Activated CD4-positive, alpha-beta memory T cell treated with anti-CD3 and anti-CD28 coated beads for 36 hours (primary cell): ENCODE measurements at regions of chr3 and their contacts with region 1.

Region 1: GRCh38 chr3:158109804-158110657 is at the start of gene RSRC1:
- DNase-seq: peak; percentile 85
- H3K4me3 Mint-ChIP-seq: peak within 1 kb of the TSS; percentile 99
- H3K27ac Mint-ChIP-seq: peak within 1 kb of the TSS; percentile 77
- H3K4me1 Mint-ChIP-seq: peaks cover 54% of the 10 kb centered on the region
- H3K27me3 Mint-ChIP-seq: peaks cover 36% of the 10 kb centered on the region
- total RNA-seq, gene RSRC1: 39.4 to 43.8 TPM

Region 2: DNA sequence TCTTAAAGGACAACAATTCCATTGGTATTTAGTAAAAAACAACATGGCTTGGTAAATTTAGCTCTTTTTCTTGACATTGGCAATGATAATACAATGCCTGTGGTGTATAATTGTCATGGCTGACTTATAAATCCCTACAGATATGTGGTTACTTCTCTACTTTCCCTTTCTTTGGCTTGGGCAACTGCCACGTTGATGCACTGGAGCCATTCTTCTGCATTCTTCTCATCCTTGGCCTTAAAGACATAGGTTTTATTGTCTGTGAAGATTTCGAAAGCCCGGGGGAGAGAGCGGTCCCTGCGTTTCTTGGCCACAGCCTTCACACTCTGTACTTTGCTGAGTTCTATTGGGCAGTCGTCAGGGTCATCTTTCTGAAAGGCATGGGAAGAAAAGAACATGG is 849.0 kb before region 1 on chr3:
- CTCF ChIA-PET with region 1: no interaction called
- POLR2A ChIA-PET with region 1: no interaction called
- intact Hi-C with region 1: no loop called
- DNase-seq: no peak
- H3K4me3 Mint-ChIP-seq: no peak overlapping the region
- H3K27ac Mint-ChIP-seq: no peak overlapping the region
- H3K4me1 Mint-ChIP-seq: no peaks in the 10 kb centered on the region
- H3K27me3 Mint-ChIP-seq: no peaks in the 10 kb centered on the region

Region 3: DNA sequence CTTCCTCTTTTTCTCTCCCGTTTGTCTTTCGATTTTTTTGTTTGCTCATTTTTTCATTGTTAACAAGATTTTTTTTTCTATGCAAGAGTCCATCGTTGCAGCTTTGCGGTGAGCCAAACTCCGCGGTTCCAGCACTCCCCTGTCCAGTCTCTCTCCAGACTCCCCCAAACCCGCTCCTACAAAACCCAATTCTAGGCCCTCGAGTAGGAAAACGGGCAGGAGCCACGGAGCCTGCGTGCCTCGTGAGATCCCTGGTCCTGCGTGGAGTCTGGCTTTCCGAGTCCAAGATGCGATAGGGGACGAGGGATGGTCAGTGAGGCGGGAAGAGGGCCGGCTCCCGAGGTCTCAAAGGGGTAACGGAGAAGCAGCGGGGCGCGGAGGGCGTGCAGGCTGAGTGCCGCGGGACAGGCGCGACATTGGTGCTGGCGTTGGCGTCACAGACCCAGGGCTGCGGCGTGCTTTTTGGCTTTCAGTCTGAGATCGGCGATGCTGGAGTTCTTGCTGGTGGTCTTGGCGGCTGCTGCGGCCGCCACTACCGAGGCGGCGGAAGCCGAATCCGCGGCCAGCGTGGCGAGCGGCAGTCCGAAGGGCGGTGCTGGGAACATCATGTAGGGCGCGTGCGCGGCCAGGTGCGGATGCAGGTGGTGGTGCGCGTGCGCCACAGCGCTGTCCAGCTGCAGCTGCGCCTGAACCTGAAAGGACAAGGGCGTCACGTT is 12.3 kb before region 1 on chr3:
- CTCF ChIA-PET with region 1: interaction called, 4 read pairs
- POLR2A ChIA-PET with region 1: interaction called, 4 read pairs
- intact Hi-C with region 1: loop called (anchors 1 kb)
- DNase-seq: peak; percentile 85
- H3K4me3 Mint-ChIP-seq: peak overlapping the region; percentile 83
- H3K27ac Mint-ChIP-seq: no peak overlapping the region
- H3K4me1 Mint-ChIP-seq: peaks cover 16% of the 10 kb centered on the region
- H3K27me3 Mint-ChIP-seq: peaks cover 78% of the 10 kb centered on the region

Region 4: GRCh38 chr3:158148218-158148617 is 38.2 kb after region 1 on chr3:
- CTCF ChIA-PET with region 1: no interaction called
- POLR2A ChIA-PET with region 1: no interaction called
- intact Hi-C with region 1: no loop called
- DNase-seq: no peak
- H3K4me3 Mint-ChIP-seq: no peak overlapping the region
- H3K27ac Mint-ChIP-seq: no peak overlapping the region
- H3K4me1 Mint-ChIP-seq: peaks cover 14% of the 10 kb centered on the region
- H3K27me3 Mint-ChIP-seq: no peaks in the 10 kb centered on the region

Region 5: DNA sequence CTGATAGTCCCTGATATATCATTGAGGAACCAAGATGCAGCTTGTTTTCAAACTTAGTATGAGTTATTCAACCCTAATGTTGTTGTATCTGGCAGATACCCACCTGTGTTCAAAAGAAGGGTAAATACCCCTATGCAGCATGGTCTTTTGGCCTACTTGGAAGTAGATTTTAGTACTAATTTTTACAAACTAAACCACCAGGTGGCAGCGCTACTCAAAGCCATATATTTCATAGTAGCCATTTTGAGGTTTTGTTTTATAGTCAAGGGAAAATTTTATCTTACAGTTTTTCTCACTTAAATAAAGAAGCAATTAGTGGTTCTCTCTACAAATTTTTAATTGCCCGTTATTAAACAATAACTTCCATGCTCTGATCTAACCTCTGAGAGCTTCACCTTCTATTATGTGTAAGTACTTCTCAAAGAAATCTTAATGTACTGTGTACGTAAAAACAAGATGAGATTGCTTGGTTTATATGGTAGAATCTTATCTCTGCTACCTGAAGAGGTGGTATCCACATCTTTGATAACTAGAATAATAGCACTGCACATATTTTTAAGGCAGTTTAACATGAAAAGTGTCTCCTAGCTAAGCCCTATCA is 429.5 kb after region 1 on chr3:
- CTCF ChIA-PET with region 1: no interaction called
- POLR2A ChIA-PET with region 1: no interaction called
- intact Hi-C with region 1: loop called (anchors 10 kb)
- DNase-seq: peak; percentile 35
- H3K4me3 Mint-ChIP-seq: no peak overlapping the region
- H3K27ac Mint-ChIP-seq: no peak overlapping the region
- H3K4me1 Mint-ChIP-seq: no peaks in the 10 kb centered on the region
- H3K27me3 Mint-ChIP-seq: no peaks in the 10 kb centered on the region